ACHN (cell line): ENCODE measurements at regions of chr6 and their contacts with region 1.

Region 1: DNA sequence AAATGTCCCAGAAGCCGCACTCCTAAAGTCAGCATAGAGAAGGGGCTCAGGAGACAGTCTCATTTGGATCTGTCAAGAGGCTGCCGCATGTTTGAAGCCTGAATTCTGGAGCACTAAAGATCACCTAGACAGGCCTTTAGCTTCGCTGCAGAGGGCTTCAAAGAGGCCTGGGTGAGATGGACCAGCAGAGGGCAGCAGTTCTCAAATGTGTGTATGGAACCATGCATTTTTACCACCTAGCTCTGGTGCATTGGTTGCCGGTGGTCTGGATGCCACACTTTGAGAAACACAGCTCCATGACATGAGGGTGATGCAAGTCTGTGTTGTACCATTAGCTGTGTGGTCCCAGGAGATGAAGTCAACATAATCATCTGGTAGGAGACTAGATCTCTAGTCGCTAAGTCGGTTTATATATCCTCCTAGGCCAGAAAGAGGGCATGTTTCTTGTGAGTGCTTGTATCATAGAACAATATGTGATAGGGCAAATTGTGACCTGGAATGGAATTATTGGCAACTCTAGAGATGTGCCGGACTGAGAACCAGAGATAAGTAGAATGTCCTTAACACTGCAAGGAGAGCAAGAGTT is 64.8 kb downstream of the KIAA0319 start:
- DNase-seq: peak; percentile 61

Region 2: GRCh38 chr6:25085756-25086155 is 504.6 kb after region 1 on chr6:
- in situ Hi-C with region 1: loop called (anchors 25 kb)
- DNase-seq: no peak